ENCODE measurements at regions of chr1 and their contacts with region 1.

Region 1: GRCh38 chr1:26145041-26145959 is 13.6 kb upstream of the FAM110D start:
- DNase-seq: peak; percentile 82 to 95 (median 85)
- ATAC-seq: peak; percentile 93
- H3K4me3 ChIP-seq: no peak overlapping the region
- H3K27ac ChIP-seq: no peak overlapping the region
- H3K4me1 ChIP-seq: peaks cover 16 to 19% of the 10 kb centered on the region in 2 experiments; a peak in 4 of 5 replicates
- H3K27me3 ChIP-seq: no peaks in the 10 kb centered on the region
- CTCF ChIP-seq: peak; percentile 91 to 96 (median 92)
- EP300 ChIP-seq: no peak
- POLR2A ChIP-seq: no peak
- RAD21 ChIP-seq: peak; percentile 99 to 100

Region 2: DNA sequence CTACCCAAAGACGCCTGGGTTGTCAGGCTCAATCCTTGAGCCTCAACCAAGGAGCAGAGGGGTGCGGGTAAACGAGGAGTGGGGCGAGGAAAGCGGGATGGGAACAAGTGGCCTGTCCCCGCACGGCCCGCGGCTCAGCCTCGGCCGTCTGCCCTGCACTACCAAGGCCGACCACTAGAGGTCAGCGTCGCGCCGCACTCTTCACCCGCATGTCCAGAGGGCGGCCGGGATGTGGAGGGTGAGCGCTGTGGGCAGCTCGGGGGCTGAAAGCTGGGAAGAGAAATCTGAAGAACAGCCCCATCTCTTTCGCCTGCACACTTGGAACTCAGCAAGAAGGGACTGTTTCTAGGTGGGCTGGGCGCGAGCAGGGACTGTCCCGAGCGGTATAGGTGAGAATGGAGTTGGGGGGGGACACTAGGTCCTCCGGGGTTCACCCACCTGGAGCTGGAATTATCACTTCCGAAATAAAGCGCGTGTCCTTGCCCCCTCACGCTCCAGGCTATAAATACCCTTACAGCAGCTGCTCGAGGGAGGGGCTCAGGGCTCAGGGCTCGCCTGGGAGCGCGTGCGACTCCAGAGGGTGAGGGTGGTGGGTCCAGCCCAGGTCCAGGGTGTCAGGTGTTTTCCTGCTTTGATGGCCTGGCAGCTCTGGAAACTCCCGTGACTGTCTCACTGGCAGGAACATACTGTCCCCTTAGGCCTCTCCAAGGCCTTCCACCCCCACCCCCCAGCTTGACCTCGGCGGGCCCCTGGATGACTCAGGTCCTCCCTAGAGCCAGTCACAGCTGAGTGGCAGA is 109.1 kb before region 1 on chr1:
- CTCF ChIA-PET with region 1: interaction called, 65 read pairs
- POLR2A ChIA-PET with region 1: interaction called, 14 read pairs
- in situ Hi-C with region 1: loop called (anchors 5 kb)
- intact Hi-C with region 1: loop called (anchors 1 kb)
- DNase-seq: peak; percentile 91 to 94 (median 92)
- ATAC-seq: peak; percentile 92
- H3K4me3 ChIP-seq: peak overlapping the region; percentile 77
- H3K27ac ChIP-seq: peak overlapping the region; percentile 87
- H3K4me1 ChIP-seq: peaks cover 25 to 57% of the 10 kb centered on the region in 2 experiments
- H3K27me3 ChIP-seq: no peaks in the 10 kb centered on the region
- CTCF ChIP-seq: peak; percentile 97 to 99 (median 98)
- EP300 ChIP-seq: no peak; the same call in 1 of the 2 replicates
- POLR2A ChIP-seq: no peak
- RAD21 ChIP-seq: peak; percentile 99

Region 3: GRCh38 chr1:26045722-26046248 is 99.5 kb before region 1 on chr1 and contains the start of gene SLC30A2:
- CTCF ChIA-PET with region 1: no interaction called
- POLR2A ChIA-PET with region 1: no interaction called
- in situ Hi-C with region 1: loop called (anchors 5 kb)
- intact Hi-C with region 1: no loop called
- DNase-seq: peak in 2 of 4 experiments; percentile 46 to 55
- ATAC-seq: peak; percentile 9
- H3K4me3 ChIP-seq: no peak within 1 kb of the TSS
- H3K27ac ChIP-seq: no peak within 1 kb of the TSS
- H3K4me1 ChIP-seq: peaks cover 36 to 45% of the 10 kb centered on the region in 2 experiments
- H3K27me3 ChIP-seq: no peaks in the 10 kb centered on the region
- CTCF ChIP-seq: peak in 1 of 3 experiments; percentile 4; a peak in 1 of 6 replicates
- EP300 ChIP-seq: no peak
- POLR2A ChIP-seq: no peak
- RAD21 ChIP-seq: no peak
- polyA plus RNA-seq, gene SLC30A2: 0.01 to 0.06 TPM

Region 4: DNA sequence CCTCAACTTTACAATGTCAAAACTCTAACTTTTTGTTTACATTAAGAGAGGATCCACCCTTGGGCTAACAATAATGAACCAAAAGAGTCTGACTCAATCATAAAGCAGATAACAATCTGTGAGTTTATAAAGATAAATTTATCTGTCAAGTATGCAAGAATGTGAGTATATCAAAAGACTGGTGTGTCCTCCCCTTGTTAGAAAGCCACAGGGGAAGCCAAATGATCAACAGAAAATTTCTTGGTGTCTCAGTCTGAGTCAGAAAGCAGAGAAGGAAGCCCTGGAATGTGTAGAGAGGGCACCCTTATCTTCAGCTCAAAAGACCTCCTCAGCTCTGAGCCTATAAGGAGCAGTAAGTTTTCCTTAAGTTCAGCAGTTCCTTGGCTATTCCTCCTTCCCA is 47.6 kb before region 1 on chr1:
- CTCF ChIA-PET with region 1: interaction called, 114 read pairs
- POLR2A ChIA-PET with region 1: interaction called, 6 read pairs
- in situ Hi-C with region 1: no loop called
- intact Hi-C with region 1: no loop called
- DNase-seq: peak in 1 of 4 experiments; percentile 40
- ATAC-seq: peak; percentile 10; the same call in 1 of the 3 replicates
- H3K4me3 ChIP-seq: no peak overlapping the region
- H3K27ac ChIP-seq: no peak overlapping the region
- H3K4me1 ChIP-seq: peaks cover 15 to 35% of the 10 kb centered on the region in 2 experiments
- H3K27me3 ChIP-seq: no peaks in the 10 kb centered on the region
- CTCF ChIP-seq: no peak
- EP300 ChIP-seq: no peak
- POLR2A ChIP-seq: no peak
- RAD21 ChIP-seq: no peak

Region 5: GRCh38 chr1:26111530-26112406 is 33.5 kb before region 1 on chr1 and contains the start of gene PDIK1L:
- CTCF ChIA-PET with region 1: interaction called, 114 read pairs
- POLR2A ChIA-PET with region 1: interaction called, 11 read pairs
- in situ Hi-C with region 1: loop called (anchors 5 kb)
- intact Hi-C with region 1: no loop called
- DNase-seq: peak; percentile 90 to 98 (median 94)
- ATAC-seq: peak; percentile 85
- H3K4me3 ChIP-seq: peak within 1 kb of the TSS; percentile 94
- H3K27ac ChIP-seq: peak within 1 kb of the TSS; percentile 92
- H3K4me1 ChIP-seq: peaks cover 13 to 29% of the 10 kb centered on the region in 2 experiments
- H3K27me3 ChIP-seq: no peaks in the 10 kb centered on the region
- CTCF ChIP-seq: 0 out of 6 replicates have a peak, but pooled peaks of 2 of the 3 experiments have one; percentile 4 to 10
- EP300 ChIP-seq: no peak; the same call in 1 of the 2 replicates
- POLR2A ChIP-seq: peak; percentile 84
- RAD21 ChIP-seq: peak in 1 of 2 experiments; percentile 14; a peak in 1 of 4 replicates
- polyA plus RNA-seq, gene PDIK1L: 14.7 to 21.5 TPM

Region 6: DNA sequence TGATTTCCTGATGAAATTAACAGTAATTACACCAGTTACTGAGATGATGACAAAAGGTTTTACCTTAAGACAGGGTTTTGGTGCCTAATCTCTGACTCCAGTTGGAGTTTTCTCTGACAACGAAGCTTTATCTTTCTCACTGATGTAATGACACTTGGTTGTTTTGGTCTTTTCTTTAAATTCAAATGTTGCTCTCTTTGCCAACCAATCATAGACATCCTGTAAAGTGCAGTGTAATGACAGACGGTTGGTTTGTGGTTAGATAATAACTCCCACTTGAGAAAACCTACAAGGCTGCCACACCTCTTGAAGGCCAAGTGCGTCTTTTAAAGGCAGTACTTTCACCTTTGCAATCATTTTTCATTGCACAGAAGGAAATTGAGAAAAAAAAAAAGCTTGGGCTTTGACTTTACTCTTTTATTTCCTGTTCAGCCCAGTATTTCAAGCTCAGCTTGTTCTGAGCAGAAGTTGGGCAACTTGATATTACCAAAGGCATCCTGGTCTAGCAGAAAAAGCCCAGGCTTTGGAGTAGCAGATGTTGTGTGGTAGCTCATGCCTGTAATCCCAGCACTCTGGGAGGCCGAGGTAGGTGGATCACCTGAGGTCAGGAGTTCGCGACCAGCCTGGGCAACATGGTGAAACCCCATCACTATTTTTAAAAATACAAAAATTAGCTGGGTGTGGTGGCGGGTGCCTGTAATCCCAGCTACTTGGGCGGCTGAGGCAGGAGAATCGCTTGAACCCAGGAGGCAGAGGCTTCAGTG is 18.8 kb before region 1 on chr1:
- CTCF ChIA-PET with region 1: interaction called, 3 read pairs
- POLR2A ChIA-PET with region 1: interaction called, 237 read pairs
- in situ Hi-C with region 1: no loop called
- intact Hi-C with region 1: loop called (anchors 2 kb)
- DNase-seq: peak; percentile 81 to 97 (median 89)
- ATAC-seq: peak; percentile 84
- H3K4me3 ChIP-seq: peak overlapping the region; percentile 24
- H3K27ac ChIP-seq: peak overlapping the region; percentile 99
- H3K4me1 ChIP-seq: peaks cover 34 to 78% of the 10 kb centered on the region in 2 experiments
- H3K27me3 ChIP-seq: no peaks in the 10 kb centered on the region
- CTCF ChIP-seq: no peak
- EP300 ChIP-seq: peak; percentile 100
- POLR2A ChIP-seq: peak; percentile 83
- RAD21 ChIP-seq: peak in 1 of 2 experiments; percentile 7; a peak in 2 of 4 replicates